Left lung (tissue), 14 donors: ENCODE measurements at regions of chrX and their contacts with region 1.

Region 1: GRCh38 chrX:132615391-132616131 is 126.7 kb upstream of the MBNL3 start:
- DNase-seq: peak in 1 of 4 donors; percentile 40
- ATAC-seq: peak; percentile 75
- H3K4me3 ChIP-seq: no peak overlapping the region
- H3K27ac ChIP-seq: no peak overlapping the region
- H3K4me1 ChIP-seq: no peaks in the 10 kb centered on the region
- H3K27me3 ChIP-seq: peaks cover 0 to 7% of the 10 kb centered on the region in 2 donors
- CTCF ChIP-seq: peak; percentile 28 to 29

Region 2: GRCh38 chrX:132226169-132226568 is 389.4 kb before region 1 on chrX:
- intact Hi-C with region 1: loop called in 1 of 2 experiments (anchors 10 kb)
- DNase-seq: no peak
- ATAC-seq: no peak
- H3K4me3 ChIP-seq: no peak overlapping the region
- H3K27ac ChIP-seq: no peak overlapping the region
- H3K4me1 ChIP-seq: no peaks in the 10 kb centered on the region
- H3K27me3 ChIP-seq: no peaks in the 10 kb centered on the region
- CTCF ChIP-seq: no peak

Region 3: GRCh38 chrX:132292793-132293192 is 322.8 kb before region 1 on chrX:
- intact Hi-C with region 1: loop called in 1 of 2 experiments (anchors 5 kb)
- DNase-seq: peak in 2 of 4 donors; percentile 49 to 74
- ATAC-seq: peak; percentile 93
- H3K4me3 ChIP-seq: no peak overlapping the region
- H3K27ac ChIP-seq: no peak overlapping the region
- H3K4me1 ChIP-seq: no peaks in the 10 kb centered on the region
- H3K27me3 ChIP-seq: peaks cover 0 to 3% of the 10 kb centered on the region in 2 donors
- CTCF ChIP-seq: peak; percentile 45 to 56

Region 4: DNA sequence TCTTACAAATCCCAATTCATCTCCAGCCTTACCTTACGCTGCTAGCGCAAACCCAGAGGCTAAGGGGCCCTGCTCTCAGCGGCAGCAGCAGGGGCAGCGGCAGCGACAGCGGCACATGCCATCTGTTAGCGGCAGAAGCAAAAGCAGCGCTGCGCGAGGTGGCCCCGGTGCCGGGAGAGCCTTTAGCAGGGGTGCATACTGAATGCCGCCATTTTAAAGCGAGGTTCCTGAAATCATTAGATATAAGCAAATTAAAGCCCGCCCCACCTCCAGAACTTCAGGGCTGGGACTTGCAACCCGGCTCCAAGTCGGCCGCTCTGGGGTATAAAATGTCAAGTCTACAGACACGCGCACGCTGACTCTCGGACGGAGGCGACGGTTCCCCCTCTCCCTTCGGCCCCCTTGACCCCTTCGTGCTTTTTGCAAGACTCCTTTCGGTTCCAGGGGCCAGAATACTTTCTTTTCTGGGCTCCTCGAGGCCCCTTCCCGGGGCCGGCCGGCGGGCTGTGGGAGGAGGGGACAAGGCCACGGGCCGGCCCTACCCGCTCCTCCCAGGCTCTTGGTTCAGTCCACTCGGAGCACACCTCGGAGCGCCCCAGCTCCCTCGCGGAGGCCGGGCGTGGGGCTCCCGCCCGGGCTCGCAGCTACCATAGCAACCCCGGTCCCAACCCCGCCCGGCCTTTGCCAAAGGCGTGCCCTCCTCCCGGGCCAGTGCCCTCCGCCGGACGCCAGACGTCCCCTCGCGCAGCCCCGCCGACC is 126.6 kb before region 1 on chrX and contains the start of gene MBNL3:
- intact Hi-C with region 1: no loop called
- DNase-seq: peak; percentile 60 to 92 (median 74)
- ATAC-seq: peak; percentile 95
- H3K4me3 ChIP-seq: peak within 1 kb of the TSS; percentile 40 to 54
- H3K27ac ChIP-seq: peak within 1 kb of the TSS; percentile 82 to 90
- H3K4me1 ChIP-seq: peaks cover 0 to 22% of the 10 kb centered on the region in 2 donors
- H3K27me3 ChIP-seq: peaks cover 0 to 3% of the 10 kb centered on the region in 2 donors
- CTCF ChIP-seq: no peak
- polyA plus RNA-seq, gene MBNL3: 17.9 to 22.6 (median 20.6) TPM

Region 5: DNA sequence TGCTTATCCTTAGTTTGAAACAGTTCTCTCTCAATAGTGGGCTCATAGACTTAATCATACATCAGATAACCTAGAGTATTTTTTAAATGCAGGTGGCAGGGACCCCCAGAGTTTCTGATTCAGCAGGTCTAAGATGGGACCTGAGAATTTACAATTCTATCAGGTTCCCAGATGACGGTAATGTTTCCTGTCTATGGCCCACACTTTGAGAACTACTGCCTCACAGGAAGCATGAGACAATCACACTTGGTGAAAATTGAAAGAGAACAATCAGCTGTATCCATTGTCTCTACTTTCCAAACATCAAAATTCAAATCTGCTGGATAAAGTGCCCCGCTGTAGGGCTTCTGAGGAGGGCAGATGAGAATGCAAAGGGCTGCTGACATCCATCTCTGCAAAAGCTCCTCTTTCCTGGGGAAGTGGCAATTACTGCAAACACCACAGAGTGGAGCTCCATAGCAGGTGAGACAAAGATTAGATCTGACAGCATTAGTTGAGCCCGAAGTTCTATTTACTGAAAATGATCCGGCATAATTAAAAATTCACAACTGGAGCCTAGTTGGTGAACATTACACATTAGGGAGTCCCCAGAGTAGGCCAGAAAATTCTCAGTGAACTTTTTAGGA is 61.1 kb after region 1 on chrX:
- intact Hi-C with region 1: no loop called
- DNase-seq: no peak
- ATAC-seq: peak; percentile 44
- H3K4me3 ChIP-seq: no peak overlapping the region
- H3K27ac ChIP-seq: no peak overlapping the region
- H3K4me1 ChIP-seq: no peaks in the 10 kb centered on the region
- H3K27me3 ChIP-seq: no peaks in the 10 kb centered on the region
- CTCF ChIP-seq: no peak